Left cardiac atrium (tissue), 4 donors: ENCODE measurements at regions of chr1 and their contacts with region 1.

Region 1: DNA sequence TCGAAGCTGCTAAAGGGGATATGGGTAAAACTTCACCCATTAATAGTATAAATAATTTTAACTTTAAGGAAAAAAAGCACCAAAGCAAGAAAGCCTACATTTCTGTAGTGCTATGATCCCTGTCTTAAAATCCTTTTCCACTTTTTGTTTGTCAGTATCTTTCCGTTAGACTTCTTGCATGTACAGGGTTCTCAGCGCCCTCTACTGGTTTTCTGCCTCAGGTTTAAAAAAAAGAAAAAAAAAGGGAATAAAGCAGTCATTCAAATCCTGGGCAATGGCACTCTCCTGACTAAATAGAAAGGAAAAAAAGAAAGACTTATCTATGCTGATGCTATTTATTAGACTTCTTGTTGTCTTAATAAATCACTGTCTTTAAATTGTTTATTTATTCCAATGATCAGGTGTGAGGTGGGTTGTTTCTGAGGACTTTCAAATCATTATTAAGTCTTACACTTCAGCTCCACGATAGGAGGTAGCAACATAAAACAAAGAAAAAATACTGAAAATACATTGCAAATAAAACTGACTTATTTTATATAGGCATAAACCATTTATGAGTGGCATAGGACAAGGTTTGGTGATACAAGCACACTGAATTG is 475.4 kb upstream of the NR5A2 start:
- DNase-seq: peak; percentile 21
- ATAC-seq: no peak

Region 2: GRCh38 chr1:198756470-198756869 is 795.6 kb before region 1 on chr1:
- intact Hi-C with region 1: loop called in 1 of 2 experiments (anchors 5 kb)
- DNase-seq: no peak
- ATAC-seq: no peak